HepG2 (cell line): ENCODE measurements at regions of chr19 and their contacts with region 1.

Region 1: DNA sequence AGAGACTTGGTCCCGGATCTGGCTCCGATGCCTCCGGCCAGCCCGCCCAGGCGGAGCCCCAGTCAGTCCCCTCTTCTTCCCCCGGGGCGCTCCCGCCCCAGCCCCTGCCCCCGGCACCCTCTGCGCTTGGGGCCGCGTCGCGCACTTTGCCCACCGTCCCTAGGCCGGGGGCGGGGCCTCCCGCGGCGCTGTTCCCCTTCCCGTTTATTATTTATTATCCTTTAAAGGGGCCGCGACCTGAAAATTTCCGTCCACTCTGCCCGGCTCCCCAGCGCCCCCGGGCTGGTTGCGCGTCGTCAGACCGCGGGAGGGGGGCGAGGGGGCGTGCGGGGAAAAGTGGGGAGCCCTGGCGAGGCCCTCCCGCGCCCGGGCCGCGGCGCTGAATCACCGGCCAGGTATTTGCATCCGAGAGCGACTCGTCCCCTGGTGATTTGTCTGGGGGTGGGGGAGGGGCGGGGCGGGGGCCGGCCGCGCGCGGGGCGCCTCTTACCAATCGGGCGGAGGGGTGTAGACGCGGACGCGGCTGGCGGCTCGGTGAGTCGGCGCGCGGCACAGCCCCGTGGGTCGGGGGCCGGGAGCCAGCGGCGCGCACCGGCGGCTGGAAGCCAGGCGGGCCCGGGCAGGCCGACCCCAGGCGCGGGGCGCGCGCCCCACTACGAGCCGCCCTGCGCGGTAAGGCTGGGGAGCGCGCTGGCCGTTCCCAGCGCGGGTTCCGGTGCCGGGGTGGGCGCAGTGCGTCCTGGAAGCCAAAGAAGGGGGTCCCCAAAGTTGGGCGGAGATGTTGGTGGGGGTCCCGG is at the start of gene ARID3A:
- DNase-seq: peak; percentile 82
- ATAC-seq: peak; percentile 63
- H3K4me3 ChIP-seq: peak within 1 kb of the TSS; percentile 88 to 98 (median 96)
- H3K27ac ChIP-seq: peak within 1 kb of the TSS; percentile 92
- H3K4me1 ChIP-seq: peaks cover 45% of the 10 kb centered on the region
- H3K27me3 ChIP-seq: no peaks in the 10 kb centered on the region
- CTCF ChIP-seq: no peak
- EP300 ChIP-seq: peak in 1 of 2 experiments; percentile 32; a peak in 2 of 4 replicates
- POLR2A ChIP-seq: peak in 1 of 2 experiments; percentile 52; a peak in 3 of 4 replicates
- RAD21 ChIP-seq: no peak; the same call in 1 of the 2 replicates
- total RNA-seq, gene ARID3A: 53.8 and 71.3 TPM in 2 replicates

Region 2: DNA sequence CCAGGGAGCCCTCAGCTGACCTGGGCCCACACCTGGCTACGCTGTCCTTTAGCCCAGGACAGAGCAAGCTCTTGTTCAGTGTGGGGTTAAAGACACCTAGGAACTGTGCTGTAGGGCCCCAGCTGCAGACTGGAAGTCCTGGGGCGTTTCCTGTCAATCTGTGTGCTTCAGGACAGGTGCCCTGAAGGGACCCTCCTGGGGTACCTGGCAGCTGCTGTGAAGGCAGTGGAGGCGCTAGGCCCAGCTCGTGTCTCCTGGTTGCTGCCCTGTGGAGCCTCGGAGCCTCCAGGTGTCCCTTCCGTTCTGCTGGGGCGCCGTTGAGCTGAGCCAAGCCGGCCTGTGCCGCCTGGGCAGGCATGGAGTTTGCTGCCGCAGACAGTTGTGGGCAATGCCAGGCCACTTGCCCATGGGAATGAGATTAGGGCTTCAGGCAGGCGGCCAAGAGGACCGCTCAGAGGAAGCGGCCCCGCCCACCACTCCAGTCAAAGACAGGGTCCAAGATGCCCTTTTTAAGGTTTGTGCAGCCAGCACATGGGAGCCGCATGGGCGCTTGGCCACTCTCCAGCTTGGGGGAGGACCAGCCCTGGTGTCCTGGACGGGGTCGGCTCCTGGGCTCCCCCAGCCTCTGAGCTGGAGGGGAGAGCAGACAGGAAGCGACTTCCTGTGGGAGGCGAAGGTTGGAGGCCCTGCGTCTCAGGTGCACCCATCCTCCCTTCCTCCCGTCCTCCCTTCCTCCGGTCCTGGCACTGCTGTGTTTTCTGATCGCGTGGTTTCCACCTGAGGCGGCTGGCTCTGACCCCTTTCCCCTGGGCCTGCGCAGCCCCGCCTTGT is 124.5 kb before region 1 on chr19:
- CTCF ChIA-PET with region 1: no interaction called
- POLR2A ChIA-PET with region 1: no interaction called
- in situ Hi-C with region 1: no loop called
- intact Hi-C with region 1: no loop called
- DNase-seq: no peak
- ATAC-seq: no peak
- H3K4me3 ChIP-seq: peak overlapping the region in 1 of 3 experiments; percentile 96; a peak in 2 of 6 replicates
- H3K27ac ChIP-seq: peak overlapping the region; percentile 45
- H3K4me1 ChIP-seq: peaks cover 36% of the 10 kb centered on the region
- H3K27me3 ChIP-seq: no peaks in the 10 kb centered on the region; a peak in 1 of 5 replicates
- CTCF ChIP-seq: no peak
- EP300 ChIP-seq: no peak
- POLR2A ChIP-seq: no peak; a peak in 3 of 4 replicates
- RAD21 ChIP-seq: 0 out of 2 replicates have a peak, but pooled peaks have one; percentile 20

Region 3: GRCh38 chr19:860481-861101 is 65.1 kb before region 1 on chr19:
- CTCF ChIA-PET with region 1: interaction called, 9 read pairs
- POLR2A ChIA-PET with region 1: no interaction called
- in situ Hi-C with region 1: no loop called
- intact Hi-C with region 1: loop called (anchors 1 kb)
- DNase-seq: peak; percentile 53
- ATAC-seq: peak; percentile 75
- H3K4me3 ChIP-seq: peak overlapping the region; percentile 30 to 67 (median 60); a peak in 5 of 6 replicates
- H3K27ac ChIP-seq: no peak overlapping the region
- H3K4me1 ChIP-seq: peaks cover 19% of the 10 kb centered on the region
- H3K27me3 ChIP-seq: no peaks in the 10 kb centered on the region; a peak in 1 of 5 replicates
- CTCF ChIP-seq: peak; percentile 69
- EP300 ChIP-seq: no peak
- POLR2A ChIP-seq: peak; percentile 29 to 61; a peak in 1 of 4 replicates
- RAD21 ChIP-seq: peak; percentile 36; the same call in 1 of the 2 replicates

Region 4: DNA sequence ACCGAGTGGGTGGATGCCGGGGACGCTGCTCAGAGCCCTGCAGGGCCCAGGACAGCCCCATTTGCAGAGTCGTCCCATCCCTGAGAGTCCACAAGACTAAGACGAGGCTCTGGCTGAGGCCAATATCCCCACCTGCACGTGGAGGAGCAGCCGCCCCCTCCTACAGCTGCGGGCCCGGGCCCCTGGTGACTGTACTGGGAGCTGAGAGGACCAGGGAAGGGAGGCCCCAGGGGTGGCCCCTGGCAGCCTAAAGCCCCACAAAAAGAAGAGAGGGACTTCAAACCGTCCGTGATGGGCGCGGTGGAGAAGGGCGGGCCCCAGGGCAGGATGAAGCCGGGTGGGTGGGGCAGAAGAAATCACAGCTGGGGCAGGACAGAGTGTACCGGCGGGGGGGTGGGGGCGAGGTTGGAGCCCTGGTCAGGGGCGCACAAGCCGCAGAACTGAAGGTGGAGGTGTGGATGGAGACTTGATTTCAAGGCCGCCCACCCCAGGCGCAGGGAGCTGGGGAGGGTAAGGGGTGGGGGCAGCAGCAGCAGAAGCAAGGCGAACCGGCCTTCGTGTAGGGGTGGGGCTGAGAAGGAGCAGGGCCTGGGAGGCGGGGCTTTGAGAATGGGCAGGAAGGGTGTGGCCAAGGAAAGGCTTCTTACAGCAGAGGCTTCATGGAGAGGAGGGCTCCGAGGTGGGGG is 53.3 kb before region 1 on chr19:
- CTCF ChIA-PET with region 1: no interaction called
- POLR2A ChIA-PET with region 1: no interaction called
- in situ Hi-C with region 1: no loop called
- intact Hi-C with region 1: no loop called
- DNase-seq: no peak
- ATAC-seq: peak; percentile 45
- H3K4me3 ChIP-seq: no peak overlapping the region
- H3K27ac ChIP-seq: peak overlapping the region; percentile 26
- H3K4me1 ChIP-seq: no peaks in the 10 kb centered on the region
- H3K27me3 ChIP-seq: no peaks in the 10 kb centered on the region
- CTCF ChIP-seq: no peak
- EP300 ChIP-seq: no peak
- POLR2A ChIP-seq: no peak
- RAD21 ChIP-seq: no peak

Region 5: DNA sequence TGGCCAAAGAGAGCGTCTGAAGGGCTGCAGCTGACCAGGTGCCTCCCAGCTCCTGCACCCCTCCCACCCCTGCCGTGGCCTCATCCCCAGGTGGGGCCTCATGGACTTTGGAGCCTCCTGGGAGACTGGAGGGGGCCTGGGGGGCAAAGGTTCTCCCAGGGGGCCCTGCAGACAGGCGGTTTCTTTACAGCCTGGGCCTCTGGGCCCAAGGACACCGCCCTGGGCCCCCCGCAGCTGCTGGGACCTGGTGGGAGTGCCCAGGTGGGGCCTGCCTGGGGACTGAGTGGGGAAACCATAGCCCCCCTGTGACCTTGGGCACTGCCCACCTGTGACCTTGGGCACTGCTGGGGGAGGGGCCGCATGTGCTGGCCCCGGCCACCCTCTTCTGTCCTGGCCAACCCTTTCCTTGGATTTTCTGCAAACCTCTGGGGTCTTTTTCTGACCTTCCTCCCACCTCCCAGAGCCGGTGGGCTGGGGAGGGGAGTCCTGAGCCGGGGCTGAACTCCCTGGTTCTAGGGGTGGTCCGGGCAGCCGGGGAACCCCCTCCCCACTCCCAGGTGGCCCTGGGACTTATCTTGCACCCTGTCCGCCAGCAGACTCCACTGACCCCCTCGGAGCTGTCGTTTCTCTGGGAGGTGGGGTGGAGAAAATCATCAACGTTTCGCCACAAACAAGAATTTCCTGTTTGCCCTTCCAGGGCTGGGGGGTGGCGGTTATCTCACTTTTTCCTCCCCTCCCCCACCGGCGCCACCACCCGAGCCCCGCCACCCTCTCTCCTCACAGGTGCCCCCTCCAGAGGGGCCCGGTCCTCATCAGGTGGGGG is 27.1 kb after region 1 on chr19:
- CTCF ChIA-PET with region 1: no interaction called
- POLR2A ChIA-PET with region 1: interaction called, 50 read pairs
- in situ Hi-C with region 1: no loop called
- intact Hi-C with region 1: no loop called
- DNase-seq: peak; percentile 95
- ATAC-seq: peak; percentile 82
- H3K4me3 ChIP-seq: peak overlapping the region; percentile 31 to 70 (median 36); a peak in 5 of 6 replicates
- H3K27ac ChIP-seq: peak overlapping the region; percentile 99
- H3K4me1 ChIP-seq: peaks cover 86% of the 10 kb centered on the region
- H3K27me3 ChIP-seq: no peaks in the 10 kb centered on the region
- CTCF ChIP-seq: peak; percentile 32; the same call in 1 of the 2 replicates
- EP300 ChIP-seq: peak; percentile 98 to 99
- POLR2A ChIP-seq: peak; percentile 55 to 59; a peak in 3 of 4 replicates
- RAD21 ChIP-seq: peak; percentile 82

Region 6: DNA sequence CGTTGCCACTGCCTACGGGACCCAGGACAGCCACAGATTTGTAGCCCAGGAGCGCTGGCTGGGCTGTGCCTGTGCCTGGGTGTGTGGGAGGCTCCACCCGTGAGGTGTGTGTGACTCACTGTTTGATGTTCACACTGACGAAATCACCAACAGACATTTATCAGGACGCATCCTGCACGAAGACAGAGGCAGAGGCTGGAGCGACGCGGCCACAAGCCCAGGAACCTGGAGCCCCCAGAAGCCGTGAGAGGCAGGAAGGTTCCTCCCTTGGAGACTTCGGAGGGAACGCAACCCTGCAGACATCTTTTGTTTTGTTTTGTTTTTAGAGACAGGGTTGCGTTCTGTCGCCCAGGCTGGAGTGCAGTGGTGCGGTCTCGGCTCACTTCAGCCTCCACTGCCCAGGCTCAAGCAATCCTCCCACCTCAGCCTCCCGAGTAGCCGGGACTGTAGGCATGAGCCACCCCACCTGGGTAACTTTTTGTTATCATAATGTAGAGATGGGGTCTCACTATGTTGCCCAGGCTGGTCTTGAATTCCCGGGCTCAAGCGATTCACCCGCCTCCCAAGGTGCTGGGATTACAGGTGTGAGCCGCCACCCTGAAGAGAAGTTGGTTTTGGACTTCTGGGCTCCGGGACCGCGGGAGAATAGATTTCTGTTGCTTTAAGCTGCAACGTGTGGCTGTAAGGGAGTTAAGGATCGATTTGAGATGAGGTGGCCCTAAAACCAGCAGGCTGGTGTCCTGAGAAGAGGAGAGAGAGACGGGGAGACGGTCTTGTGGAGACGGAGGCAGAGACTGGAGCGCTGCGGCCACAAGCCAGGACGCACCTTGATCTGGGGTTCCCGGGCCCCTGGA is 33.5 kb after region 1 on chr19:
- CTCF ChIA-PET with region 1: interaction called, 4 read pairs
- POLR2A ChIA-PET with region 1: interaction called, 50 read pairs
- in situ Hi-C with region 1: loop called (anchors 5 kb)
- intact Hi-C with region 1: no loop called
- DNase-seq: peak; percentile 59
- ATAC-seq: peak; percentile 3; the same call in 1 of the 3 replicates
- H3K4me3 ChIP-seq: peak overlapping the region in 1 of 3 experiments; percentile 30; a peak in 1 of 6 replicates
- H3K27ac ChIP-seq: peak overlapping the region; percentile 74
- H3K4me1 ChIP-seq: peaks cover 86% of the 10 kb centered on the region
- H3K27me3 ChIP-seq: no peaks in the 10 kb centered on the region
- CTCF ChIP-seq: no peak
- EP300 ChIP-seq: no peak
- POLR2A ChIP-seq: peak in 1 of 2 experiments; percentile 48; a peak in 1 of 4 replicates
- RAD21 ChIP-seq: no peak